Activated CD4-positive, alpha-beta T cell treated with anti-CD3 and anti-CD28 coated beads for 36 hours (primary cell): ENCODE measurements at regions of chr9 and their contacts with region 1.

Region 1: DNA sequence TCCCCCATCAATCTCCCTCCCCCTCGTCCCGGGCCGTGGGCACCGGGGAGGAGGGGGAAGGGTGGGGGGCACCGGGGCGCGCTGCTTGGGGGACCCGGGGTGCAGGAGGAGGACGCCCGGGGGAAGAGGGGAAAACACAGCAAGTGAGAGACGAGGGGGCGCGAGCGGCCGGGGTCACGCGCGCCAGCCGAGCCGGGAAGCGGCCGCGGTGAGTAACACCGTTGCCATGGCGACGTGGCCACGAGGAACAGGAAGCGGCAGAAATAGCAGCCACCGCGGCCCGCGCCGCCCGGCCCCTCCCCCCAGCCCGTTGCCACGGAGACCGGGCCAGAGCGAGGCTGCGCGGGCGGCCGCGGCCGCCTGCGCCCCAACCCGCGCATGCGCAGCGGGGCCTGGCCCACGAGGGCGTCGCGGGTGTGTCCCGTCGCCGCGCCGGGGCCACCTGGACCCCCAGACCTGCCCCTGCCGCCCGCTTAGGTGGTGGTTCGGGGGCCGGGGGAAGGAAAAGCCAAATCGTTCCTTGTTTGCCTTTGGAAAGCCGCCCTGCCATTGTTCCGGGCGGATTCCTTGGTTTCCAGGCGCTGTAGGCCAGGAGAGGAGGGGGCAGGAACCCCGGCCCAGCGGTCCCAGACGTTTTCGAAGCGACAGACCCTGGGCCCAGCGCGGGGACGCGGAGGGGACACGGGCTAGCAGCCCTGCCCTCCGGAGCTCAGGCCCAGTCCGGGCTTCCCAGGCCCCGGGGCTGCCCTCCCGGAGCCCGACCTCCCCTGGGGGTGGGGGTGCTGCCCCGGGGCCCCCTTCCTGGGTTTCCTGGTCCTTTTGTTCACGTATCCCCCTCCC is 207.1 kb downstream of the C9orf50 start:
- DNase-seq: peak; percentile 99
- ATAC-seq: peak; percentile 89
- H3K4me3 Mint-ChIP-seq: peak overlapping the region; percentile 75
- H3K27ac Mint-ChIP-seq: peak overlapping the region; percentile 94
- H3K4me1 Mint-ChIP-seq: peaks cover 23% of the 10 kb centered on the region
- H3K27me3 Mint-ChIP-seq: no peaks in the 10 kb centered on the region

Region 2: DNA sequence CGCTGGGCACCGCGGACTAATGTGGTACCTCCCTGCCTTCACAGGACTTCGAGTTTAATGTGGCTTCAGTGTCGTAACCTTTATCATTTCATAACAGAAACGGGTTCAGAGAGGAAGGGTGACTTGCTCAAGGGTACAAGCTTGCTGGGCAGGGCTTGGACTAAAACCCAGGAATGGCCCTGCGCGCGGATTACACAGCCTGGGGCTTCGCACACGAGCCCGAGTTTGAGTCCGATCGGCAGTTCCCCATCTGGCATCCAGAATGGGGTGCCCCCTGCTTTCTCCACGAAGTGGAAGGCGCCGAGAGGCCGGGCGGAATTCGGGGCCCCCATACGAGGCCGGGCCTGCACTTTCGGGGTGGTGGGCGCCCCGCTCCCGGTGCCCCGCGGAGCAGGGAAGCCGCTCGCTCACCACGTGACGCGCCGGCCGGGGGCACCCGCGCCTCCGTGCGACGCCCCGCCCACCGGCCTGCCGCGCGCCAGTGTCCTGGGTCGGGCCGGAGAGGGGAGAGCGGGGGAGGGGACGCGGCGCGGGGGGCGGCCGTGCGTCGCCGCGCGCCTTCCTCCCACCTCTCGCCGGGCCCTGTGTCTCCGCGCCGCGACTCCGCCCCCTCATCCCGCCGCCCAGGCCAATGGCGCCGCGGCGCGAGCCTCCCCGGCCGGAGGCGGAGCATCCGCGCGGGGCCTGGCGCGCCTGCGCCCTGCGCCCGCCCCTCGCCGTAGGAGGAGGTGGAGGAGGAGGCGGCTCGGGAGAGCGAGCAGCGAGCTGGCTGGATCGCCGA is 725.1 kb before region 1 on chr9 and contains the start of gene SET:
- CTCF ChIA-PET with region 1: no interaction called
- POLR2A ChIA-PET with region 1: no interaction called
- intact Hi-C with region 1: loop called in 1 of 2 experiments (anchors 2 kb)
- DNase-seq: peak; percentile 96
- ATAC-seq: peak; percentile 71
- H3K4me3 Mint-ChIP-seq: peak within 1 kb of the TSS; percentile 99
- H3K27ac Mint-ChIP-seq: peak within 1 kb of the TSS; percentile 94
- H3K4me1 Mint-ChIP-seq: peaks cover 61% of the 10 kb centered on the region
- H3K27me3 Mint-ChIP-seq: no peaks in the 10 kb centered on the region
- total RNA-seq, gene SET: 673 to 682 TPM

Region 3: GRCh38 chr9:129237195-129237611 is 176.6 kb before region 1 on chr9:
- CTCF ChIA-PET with region 1: no interaction called
- POLR2A ChIA-PET with region 1: no interaction called
- intact Hi-C with region 1: loop called in 1 of 2 experiments (anchors 1 kb)
- DNase-seq: peak; percentile 84
- ATAC-seq: peak; percentile 80
- H3K4me3 Mint-ChIP-seq: peak overlapping the region; percentile 71
- H3K27ac Mint-ChIP-seq: peak overlapping the region; percentile 94
- H3K4me1 Mint-ChIP-seq: peaks cover 51% of the 10 kb centered on the region
- H3K27me3 Mint-ChIP-seq: no peaks in the 10 kb centered on the region

Region 4: GRCh38 chr9:129383561-129384416 is 30.0 kb before region 1 on chr9:
- CTCF ChIA-PET with region 1: no interaction called
- POLR2A ChIA-PET with region 1: no interaction called
- intact Hi-C with region 1: loop called in 1 of 2 experiments (anchors 1 kb)
- DNase-seq: peak; percentile 83
- ATAC-seq: peak; percentile 96
- H3K4me3 Mint-ChIP-seq: peak overlapping the region; percentile 59
- H3K27ac Mint-ChIP-seq: peak overlapping the region; percentile 58
- H3K4me1 Mint-ChIP-seq: peaks cover 8% of the 10 kb centered on the region
- H3K27me3 Mint-ChIP-seq: no peaks in the 10 kb centered on the region

Region 5: DNA sequence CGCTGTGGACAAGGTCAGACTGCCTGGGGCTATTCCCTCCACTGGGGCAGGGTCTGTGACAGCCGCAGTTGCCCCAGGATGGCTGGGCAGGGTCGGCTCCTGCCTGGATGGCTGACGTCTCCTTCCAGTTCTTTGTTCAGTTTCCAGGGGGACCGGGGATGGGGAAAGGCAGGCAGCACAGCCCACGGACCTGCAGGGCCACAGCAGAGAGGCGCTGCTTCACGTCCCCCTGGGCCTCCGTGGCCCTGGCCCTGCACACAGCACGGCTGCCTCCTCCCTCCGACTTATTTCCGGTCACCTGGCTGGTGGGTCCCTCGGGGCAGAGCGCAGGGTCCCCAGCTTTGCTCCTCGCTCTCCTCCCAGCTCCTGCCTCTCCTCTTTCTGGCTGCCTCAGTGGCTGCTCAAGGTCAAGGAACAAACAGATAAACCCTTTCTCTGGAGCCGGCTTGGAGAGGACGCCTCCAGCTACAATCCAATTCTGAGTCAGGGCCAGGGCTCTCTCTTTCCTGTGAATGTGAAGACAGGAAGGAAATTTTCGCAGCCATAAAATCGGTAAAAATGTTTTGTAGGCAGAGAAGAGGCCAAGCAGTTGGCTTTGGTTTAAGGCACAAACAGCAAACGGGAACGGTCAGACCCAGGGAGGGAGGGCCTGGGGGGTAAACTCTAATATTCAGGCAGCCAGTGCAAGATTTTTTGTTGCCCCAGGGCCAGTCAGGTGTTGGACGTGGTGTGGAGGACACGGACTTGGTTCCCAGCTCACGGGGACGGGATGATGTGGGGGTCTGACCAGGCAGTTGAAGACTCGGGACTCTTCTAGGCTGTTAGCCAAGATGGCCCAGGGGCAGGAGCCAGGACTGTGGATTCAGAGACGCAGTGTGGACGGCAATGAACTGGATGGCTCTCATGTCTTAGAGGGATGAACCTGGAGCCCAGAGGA is 37.6 kb after region 1 on chr9:
- CTCF ChIA-PET with region 1: no interaction called
- POLR2A ChIA-PET with region 1: no interaction called
- intact Hi-C with region 1: no loop called
- DNase-seq: no peak
- ATAC-seq: no peak
- H3K4me3 Mint-ChIP-seq: no peak overlapping the region
- H3K27ac Mint-ChIP-seq: no peak overlapping the region
- H3K4me1 Mint-ChIP-seq: peaks cover 5% of the 10 kb centered on the region
- H3K27me3 Mint-ChIP-seq: no peaks in the 10 kb centered on the region

Region 6: DNA sequence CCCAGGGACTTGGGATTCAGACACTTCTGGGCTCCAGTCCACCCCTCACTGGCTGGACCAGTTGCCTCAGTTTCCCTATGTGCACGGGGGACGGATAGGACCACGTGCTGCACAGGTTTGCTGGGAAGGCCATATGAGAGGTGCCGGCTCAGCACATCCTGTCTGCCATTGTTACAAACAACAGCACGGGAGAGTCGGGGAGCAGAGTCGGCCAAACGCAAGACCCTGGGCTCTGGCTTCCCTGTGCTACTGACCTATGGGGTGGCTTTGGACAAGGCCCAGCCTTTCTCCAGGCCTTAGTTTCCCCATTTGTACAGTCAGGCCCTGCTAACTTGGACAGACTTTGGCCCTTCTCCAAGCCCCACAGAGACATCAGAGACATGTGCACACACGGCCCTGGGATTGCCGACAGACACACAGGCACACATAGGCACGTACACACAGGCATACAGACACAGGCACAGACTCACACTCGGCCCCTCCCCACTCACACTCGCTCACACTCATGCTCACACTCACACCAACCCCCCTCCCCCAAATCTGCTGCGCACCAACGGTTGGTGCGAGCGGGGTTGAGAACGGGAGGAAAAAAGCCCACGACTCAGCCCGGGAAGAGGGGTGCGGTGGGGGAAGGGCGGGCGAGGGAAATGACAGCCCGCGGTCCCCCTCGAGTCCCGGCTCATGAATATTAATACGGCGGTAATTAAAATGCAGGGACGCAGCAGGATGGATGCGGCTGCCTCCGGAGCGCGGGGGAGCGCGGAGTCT is 74.1 kb after region 1 on chr9:
- CTCF ChIA-PET with region 1: no interaction called
- POLR2A ChIA-PET with region 1: interaction called, 6 read pairs
- intact Hi-C with region 1: loop called (anchors 1 to 5 kb)
- DNase-seq: peak; percentile 76
- ATAC-seq: peak; percentile 34
- H3K4me3 Mint-ChIP-seq: peak overlapping the region; percentile 93
- H3K27ac Mint-ChIP-seq: peak overlapping the region; percentile 96
- H3K4me1 Mint-ChIP-seq: peaks cover 66% of the 10 kb centered on the region
- H3K27me3 Mint-ChIP-seq: no peaks in the 10 kb centered on the region

Region 7: DNA sequence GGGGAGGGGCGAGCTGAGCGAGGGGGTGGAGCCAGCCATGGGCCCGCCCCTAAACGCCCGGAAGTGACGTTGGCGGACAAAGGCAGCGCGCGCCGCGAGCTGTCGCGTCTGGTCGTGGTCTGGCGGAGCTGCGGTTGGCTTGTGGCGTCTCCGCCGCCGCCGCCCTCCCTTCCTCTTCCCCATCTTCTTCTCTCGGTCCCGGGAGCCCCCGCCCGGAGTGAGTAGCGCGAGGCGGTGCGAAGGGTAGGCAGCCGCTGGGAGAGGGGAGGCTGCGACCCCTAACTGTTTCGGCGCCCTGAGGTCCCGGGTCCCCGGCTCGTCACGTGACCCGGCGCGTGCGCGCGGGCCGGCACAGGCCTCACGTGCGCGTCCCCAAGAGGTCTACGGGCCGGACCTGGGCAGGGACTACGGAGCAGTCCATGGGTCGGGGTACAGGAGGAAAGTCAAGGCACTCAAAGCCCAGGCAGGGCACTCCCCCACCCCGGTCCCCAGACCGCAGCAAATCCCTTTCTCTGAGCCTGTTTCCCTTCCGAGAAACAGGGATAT is 212.4 kb after region 1 on chr9 and contains the start of gene NTMT1:
- CTCF ChIA-PET with region 1: no interaction called
- POLR2A ChIA-PET with region 1: no interaction called
- intact Hi-C with region 1: loop called in 1 of 2 experiments (anchors 1 kb)
- DNase-seq: peak; percentile 95
- ATAC-seq: peak; percentile 76
- H3K4me3 Mint-ChIP-seq: peak within 1 kb of the TSS; percentile 77
- H3K27ac Mint-ChIP-seq: peak within 1 kb of the TSS; percentile 93
- H3K4me1 Mint-ChIP-seq: peaks cover 52% of the 10 kb centered on the region
- H3K27me3 Mint-ChIP-seq: peaks cover 4% of the 10 kb centered on the region
- total RNA-seq, gene NTMT1: 50.1 to 69.2 TPM